Calu3 (cell line): ENCODE measurements at regions of chrX and their contacts with region 1.

Region 1: GRCh38 chrX:45801554-45801953 is 600.9 kb upstream of the DIPK2B start:
- DNase-seq: no peak
- H3K4me3 Mint-ChIP-seq: no peak overlapping the region
- H3K27ac Mint-ChIP-seq: no peak overlapping the region
- H3K4me1 Mint-ChIP-seq: peaks cover 45% of the 10 kb centered on the region
- H3K27me3 Mint-ChIP-seq: no peaks in the 10 kb centered on the region
- CTCF ChIP-seq: no peak

Region 2: DNA sequence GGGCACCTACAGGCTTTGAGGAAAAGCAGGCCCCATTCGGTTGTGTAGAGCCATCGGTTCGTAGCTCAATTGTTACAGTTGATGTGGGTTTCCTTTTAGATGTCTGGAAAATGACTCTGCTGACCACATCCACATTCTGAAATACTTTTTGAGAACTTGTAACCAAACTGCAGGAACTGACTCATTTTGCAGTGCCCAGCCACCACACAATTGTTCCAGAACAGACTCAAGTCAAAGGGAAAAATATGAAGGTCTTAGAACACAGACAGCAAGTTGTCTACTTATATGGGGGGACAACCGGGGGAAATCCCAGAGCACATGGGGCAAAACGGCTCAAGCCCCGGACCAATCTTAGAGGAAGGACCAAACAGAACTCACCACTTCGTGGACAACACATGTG is 43.2 kb before region 1 on chrX:
- CTCF ChIA-PET with region 1: no interaction called
- intact Hi-C with region 1: loop called (anchors 10 kb)
- DNase-seq: no peak
- H3K4me3 Mint-ChIP-seq: peak overlapping the region; percentile 62
- H3K27ac Mint-ChIP-seq: peak overlapping the region; percentile 90
- H3K4me1 Mint-ChIP-seq: peaks cover 52% of the 10 kb centered on the region
- H3K27me3 Mint-ChIP-seq: no peaks in the 10 kb centered on the region
- CTCF ChIP-seq: no peak